Activated T-helper 2 cell treated with anti-CD3 and anti-CD28 coated beads, Interferon-gamma antibody, Interleukin-2, Interleukin-4, amounts not matched to agents 10 μg/mL and 5 μg/mL and 100 μg/mL, durations not matched to agents 14 hours and 24 hours and 36 hours (primary cell): ENCODE measurements at regions of chr5 and their contacts with region 1.

Region 1: DNA sequence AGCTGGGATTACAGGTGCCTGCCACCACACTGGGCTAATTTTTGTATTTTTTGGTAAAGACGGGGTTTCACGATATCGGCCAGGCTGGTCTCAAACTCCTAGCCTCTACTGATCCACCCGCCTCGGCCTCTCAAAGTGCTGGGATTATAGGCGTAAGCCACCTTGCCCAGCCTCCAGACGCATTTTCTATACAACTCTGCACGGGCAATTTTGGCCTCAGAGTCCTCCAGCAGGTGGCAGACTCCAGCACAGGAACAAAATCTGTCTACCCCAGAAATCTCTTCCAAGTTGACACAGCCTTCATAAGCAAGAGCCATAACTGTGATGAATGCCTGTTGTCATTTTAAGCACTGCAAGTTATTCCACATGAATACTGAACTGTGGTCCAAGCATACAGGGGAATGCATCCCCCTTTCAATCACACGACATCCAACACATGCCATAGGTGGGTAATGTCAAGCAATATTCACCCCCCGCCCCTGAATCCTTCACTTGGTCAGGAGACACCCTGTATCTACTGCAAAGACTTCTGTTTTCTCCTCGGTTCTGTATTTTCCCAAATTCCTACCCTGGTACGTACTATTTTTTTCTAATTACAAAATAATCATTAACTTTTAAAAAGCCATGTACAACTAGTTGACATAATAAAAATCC is 50.8 kb downstream of the ALDH7A1 start:
- DNase-seq: no peak
- H3K4me3 Mint-ChIP-seq: no peak overlapping the region
- H3K27ac Mint-ChIP-seq: no peak overlapping the region
- H3K4me1 Mint-ChIP-seq: no peaks in the 10 kb centered on the region
- H3K27me3 Mint-ChIP-seq: peaks cover 6% of the 10 kb centered on the region

Region 2: DNA sequence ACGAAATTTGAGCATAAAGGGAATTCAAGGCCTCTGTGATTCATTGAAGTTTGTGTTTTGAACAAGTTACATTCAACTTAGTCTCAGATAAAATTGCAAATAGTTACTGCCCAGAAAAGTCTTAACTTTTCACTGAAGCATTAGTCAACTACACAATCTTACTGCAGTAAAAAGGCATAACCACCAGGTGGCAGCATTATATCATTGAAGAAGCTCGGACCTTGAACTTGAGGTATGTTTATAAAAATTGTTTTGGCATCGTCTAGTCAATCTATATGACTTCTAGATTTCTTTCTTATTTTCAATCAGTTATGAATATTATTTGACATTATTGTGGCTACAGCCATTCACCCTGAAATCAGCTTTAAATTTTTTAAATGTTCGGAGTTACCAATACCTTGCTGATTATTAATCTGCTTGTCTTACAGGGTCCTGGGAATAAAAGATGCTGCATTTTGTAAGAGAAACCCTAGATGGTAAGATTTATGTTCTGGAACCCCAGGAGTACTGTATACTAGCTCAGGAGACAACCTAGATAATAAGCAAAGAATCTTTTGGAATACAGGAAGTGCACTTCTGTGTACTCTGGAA is 204.9 kb before region 1 on chr5:
- intact Hi-C with region 1: loop called (anchors 1 kb)
- DNase-seq: peak; percentile 14
- H3K4me3 Mint-ChIP-seq: no peak overlapping the region
- H3K27ac Mint-ChIP-seq: no peak overlapping the region
- H3K4me1 Mint-ChIP-seq: no peaks in the 10 kb centered on the region
- H3K27me3 Mint-ChIP-seq: peaks cover 4% of the 10 kb centered on the region

Region 3: DNA sequence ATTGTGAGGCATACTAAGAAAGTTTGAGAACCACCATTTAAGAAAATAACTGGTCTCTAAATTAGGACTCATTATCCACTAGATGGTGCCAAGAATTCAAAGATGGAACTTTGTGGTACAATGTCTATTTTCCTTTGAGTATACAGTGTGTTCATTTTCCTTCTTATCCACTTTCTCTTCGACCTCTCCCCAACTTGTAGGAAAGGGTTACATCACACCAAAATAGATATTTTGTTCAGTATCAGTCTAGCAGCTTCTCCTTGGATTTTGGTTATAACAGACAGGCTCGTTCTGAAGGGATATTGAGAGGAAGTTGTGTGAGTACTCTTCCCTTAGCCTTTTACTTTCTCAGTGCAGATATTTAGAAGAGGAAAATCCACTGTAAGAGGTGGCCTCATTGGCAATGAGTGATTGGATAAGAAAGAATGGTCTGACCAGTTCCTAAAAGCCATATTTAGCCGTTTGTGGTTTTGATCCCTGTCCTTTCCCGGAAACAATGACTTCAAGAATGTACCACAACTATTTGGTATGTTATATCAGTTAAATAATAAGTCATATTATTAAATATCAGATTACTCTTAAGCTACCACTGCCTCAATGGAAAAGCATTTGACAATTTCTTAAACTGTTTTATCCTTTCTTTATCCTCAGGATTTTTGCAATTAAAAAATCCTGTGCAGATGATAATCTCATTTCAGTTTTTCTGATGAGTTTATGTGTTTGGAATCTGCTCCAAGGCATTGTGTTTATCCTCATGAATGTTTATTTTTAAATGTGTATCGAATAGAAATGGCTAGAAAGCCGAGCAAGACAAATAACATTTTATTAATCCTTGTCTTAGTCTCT is 190.0 kb before region 1 on chr5:
- intact Hi-C with region 1: loop called (anchors 1 kb)
- DNase-seq: no peak
- H3K4me3 Mint-ChIP-seq: peak overlapping the region; percentile 13
- H3K27ac Mint-ChIP-seq: no peak overlapping the region
- H3K4me1 Mint-ChIP-seq: peaks cover 15% of the 10 kb centered on the region
- H3K27me3 Mint-ChIP-seq: peaks cover 17% of the 10 kb centered on the region

Region 4: GRCh38 chr5:126808521-126808988 is 264.3 kb after region 1 on chr5:
- intact Hi-C with region 1: no loop called
- DNase-seq: no peak
- H3K4me3 Mint-ChIP-seq: no peak overlapping the region
- H3K27ac Mint-ChIP-seq: peak overlapping the region; percentile 39
- H3K4me1 Mint-ChIP-seq: peaks cover 43% of the 10 kb centered on the region
- H3K27me3 Mint-ChIP-seq: no peaks in the 10 kb centered on the region

Region 5: GRCh38 chr5:127492854-127493738 is 948.9 kb after region 1 on chr5:
- intact Hi-C with region 1: loop called (anchors 5 kb)
- DNase-seq: no peak
- H3K4me3 Mint-ChIP-seq: no peak overlapping the region
- H3K27ac Mint-ChIP-seq: no peak overlapping the region
- H3K4me1 Mint-ChIP-seq: no peaks in the 10 kb centered on the region
- H3K27me3 Mint-ChIP-seq: peaks cover 31% of the 10 kb centered on the region